ENCODE measurements at regions of chr2 and their contacts with region 1.

Region 1: DNA sequence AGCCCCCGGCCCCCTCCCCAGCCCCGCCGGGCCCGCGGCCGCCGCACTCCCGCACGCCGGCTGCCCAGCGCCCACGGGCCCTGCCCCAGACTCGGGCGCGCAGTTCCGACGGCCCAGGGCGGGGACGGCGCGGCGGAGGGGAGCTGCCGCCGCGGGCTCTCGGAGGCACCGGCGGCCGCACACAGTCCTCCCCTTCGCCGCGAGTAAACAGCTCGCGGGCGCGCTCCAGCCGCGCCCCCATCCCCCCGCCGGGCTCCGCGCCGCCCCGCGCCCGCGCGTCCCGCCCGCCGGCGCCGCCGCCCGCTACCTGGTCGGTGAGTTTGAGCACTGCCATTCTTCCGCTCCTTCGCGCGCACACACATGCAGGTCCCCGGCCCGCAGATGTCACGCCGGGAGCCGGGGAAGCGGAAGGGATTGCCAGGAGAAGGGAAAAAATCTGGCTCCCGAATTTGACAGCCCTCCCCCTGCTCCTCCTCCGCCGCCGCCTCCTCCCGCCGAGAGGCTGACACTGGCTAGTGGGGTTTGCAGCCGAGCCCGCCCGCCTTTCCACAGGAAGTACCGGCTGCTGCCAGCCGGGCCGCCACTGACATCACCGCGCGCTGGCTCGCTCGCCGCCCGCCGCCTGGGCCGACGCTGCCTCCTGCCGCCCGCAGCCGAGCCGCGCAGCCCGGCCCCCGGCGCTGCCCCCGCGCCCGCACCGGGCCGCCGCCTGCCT is at the start of gene ANKRD44:
- DNase-seq: peak; percentile 87
- H3K4me3 Mint-ChIP-seq: peak within 1 kb of the TSS; percentile 89
- H3K27ac Mint-ChIP-seq: peak within 1 kb of the TSS; percentile 93
- H3K4me1 Mint-ChIP-seq: peaks cover 63% of the 10 kb centered on the region
- H3K27me3 Mint-ChIP-seq: no peaks in the 10 kb centered on the region
- total RNA-seq, gene ANKRD44: 107 and 120 TPM in 2 replicates

Region 2: GRCh38 chr2:197113275-197113711 is 197.1 kb before region 1 on chr2:
- intact Hi-C with region 1: loop called (anchors 2 kb)
- DNase-seq: no peak
- H3K4me3 Mint-ChIP-seq: no peak overlapping the region
- H3K27ac Mint-ChIP-seq: no peak overlapping the region
- H3K4me1 Mint-ChIP-seq: peaks cover 27% of the 10 kb centered on the region
- H3K27me3 Mint-ChIP-seq: no peaks in the 10 kb centered on the region

Region 3: DNA sequence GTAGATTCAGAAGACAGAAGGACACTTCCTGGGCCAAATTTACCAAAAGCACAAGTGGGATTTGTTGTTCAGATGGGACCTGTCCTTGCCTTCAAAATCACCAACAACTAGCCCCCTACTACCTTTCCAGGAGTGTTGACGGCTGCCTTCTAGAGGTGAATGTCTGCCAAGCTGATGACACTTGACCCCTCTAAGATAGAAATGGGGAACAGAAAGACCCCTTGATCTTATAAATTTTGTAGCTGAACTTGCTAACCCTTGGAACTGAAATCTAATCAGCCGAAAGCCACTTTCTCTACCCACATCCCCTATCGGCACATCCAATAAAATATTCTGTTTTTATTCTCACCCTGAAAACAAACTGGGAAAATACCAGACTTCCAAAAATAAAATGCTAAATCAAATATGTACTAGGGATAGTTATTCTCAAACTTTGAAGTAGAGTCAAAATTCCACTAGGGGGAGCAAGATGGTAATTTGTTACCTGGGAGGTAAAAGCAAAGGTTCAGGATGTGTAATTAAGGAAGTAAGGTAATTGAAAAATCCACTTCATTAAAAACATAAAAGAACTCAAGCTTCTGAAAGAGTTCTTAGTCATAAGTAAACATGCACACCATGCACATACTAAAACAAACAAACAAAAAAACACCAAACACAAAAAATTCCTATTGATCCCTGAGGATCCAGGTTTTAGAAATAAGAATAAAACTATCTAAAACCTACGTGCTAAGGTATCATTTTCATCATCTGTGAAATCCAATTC is 119.1 kb before region 1 on chr2:
- intact Hi-C with region 1: loop called (anchors 1 kb)
- DNase-seq: no peak
- H3K4me3 Mint-ChIP-seq: no peak overlapping the region
- H3K27ac Mint-ChIP-seq: peak overlapping the region; percentile 56
- H3K4me1 Mint-ChIP-seq: peaks cover 66% of the 10 kb centered on the region
- H3K27me3 Mint-ChIP-seq: no peaks in the 10 kb centered on the region

Region 4: GRCh38 chr2:197209742-197210408 is 100.6 kb before region 1 on chr2:
- intact Hi-C with region 1: loop called (anchors 1 kb)
- DNase-seq: peak; percentile 43
- H3K4me3 Mint-ChIP-seq: peak overlapping the region; percentile 60
- H3K27ac Mint-ChIP-seq: peak overlapping the region; percentile 90
- H3K4me1 Mint-ChIP-seq: peaks cover 92% of the 10 kb centered on the region
- H3K27me3 Mint-ChIP-seq: no peaks in the 10 kb centered on the region

Region 5: DNA sequence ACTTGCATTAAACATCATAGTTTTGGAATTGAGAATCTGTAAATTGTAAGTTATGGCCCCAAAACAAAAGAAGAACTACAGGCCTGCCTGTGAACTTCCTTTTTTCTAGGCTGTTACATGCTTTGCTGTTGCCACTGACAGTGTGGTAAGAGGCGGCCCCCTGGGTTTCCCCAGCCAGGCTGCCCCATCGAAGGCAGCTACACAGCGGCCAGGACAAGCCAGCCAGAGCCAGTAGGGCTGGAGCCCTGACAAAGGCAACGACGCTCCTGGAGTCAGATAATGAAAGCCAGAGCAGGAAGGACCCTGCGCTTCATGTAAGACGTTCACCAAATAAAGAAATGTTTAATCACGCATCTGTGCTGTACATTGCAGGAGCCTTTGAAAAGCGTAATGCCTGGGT is 54.9 kb before region 1 on chr2:
- intact Hi-C with region 1: loop called (anchors 1 kb)
- DNase-seq: peak; percentile 68
- H3K4me3 Mint-ChIP-seq: peak overlapping the region; percentile 80
- H3K27ac Mint-ChIP-seq: peak overlapping the region; percentile 100
- H3K4me1 Mint-ChIP-seq: peaks cover 64% of the 10 kb centered on the region
- H3K27me3 Mint-ChIP-seq: no peaks in the 10 kb centered on the region

Region 6: GRCh38 chr2:197322724-197323720 is 12.6 kb after region 1 on chr2:
- intact Hi-C with region 1: loop called (anchors 1 kb)
- DNase-seq: peak; percentile 20
- H3K4me3 Mint-ChIP-seq: peak overlapping the region; percentile 62
- H3K27ac Mint-ChIP-seq: peak overlapping the region; percentile 92
- H3K4me1 Mint-ChIP-seq: peaks cover 56% of the 10 kb centered on the region
- H3K27me3 Mint-ChIP-seq: no peaks in the 10 kb centered on the region

Region 7: GRCh38 chr2:197434541-197435513 is 124.4 kb after region 1 on chr2 and contains the start of gene SF3B1:
- intact Hi-C with region 1: loop called (anchors 5 kb)
- DNase-seq: peak; percentile 99
- H3K4me3 Mint-ChIP-seq: peak within 1 kb of the TSS; percentile 89
- H3K27ac Mint-ChIP-seq: peak within 1 kb of the TSS; percentile 100
- H3K4me1 Mint-ChIP-seq: peaks cover 42% of the 10 kb centered on the region
- H3K27me3 Mint-ChIP-seq: no peaks in the 10 kb centered on the region
- total RNA-seq, gene SF3B1: 284 and 289 TPM in 2 replicates

Region 8: GRCh38 chr2:197596766-197597165 is 286.3 kb after region 1 on chr2:
- intact Hi-C with region 1: no loop called
- DNase-seq: no peak
- H3K4me3 Mint-ChIP-seq: no peak overlapping the region
- H3K27ac Mint-ChIP-seq: no peak overlapping the region
- H3K4me1 Mint-ChIP-seq: peaks cover 5% of the 10 kb centered on the region
- H3K27me3 Mint-ChIP-seq: peaks cover 30% of the 10 kb centered on the region